ENCODE measurements at regions of chr12 and their contacts with region 1.

Region 1: DNA sequence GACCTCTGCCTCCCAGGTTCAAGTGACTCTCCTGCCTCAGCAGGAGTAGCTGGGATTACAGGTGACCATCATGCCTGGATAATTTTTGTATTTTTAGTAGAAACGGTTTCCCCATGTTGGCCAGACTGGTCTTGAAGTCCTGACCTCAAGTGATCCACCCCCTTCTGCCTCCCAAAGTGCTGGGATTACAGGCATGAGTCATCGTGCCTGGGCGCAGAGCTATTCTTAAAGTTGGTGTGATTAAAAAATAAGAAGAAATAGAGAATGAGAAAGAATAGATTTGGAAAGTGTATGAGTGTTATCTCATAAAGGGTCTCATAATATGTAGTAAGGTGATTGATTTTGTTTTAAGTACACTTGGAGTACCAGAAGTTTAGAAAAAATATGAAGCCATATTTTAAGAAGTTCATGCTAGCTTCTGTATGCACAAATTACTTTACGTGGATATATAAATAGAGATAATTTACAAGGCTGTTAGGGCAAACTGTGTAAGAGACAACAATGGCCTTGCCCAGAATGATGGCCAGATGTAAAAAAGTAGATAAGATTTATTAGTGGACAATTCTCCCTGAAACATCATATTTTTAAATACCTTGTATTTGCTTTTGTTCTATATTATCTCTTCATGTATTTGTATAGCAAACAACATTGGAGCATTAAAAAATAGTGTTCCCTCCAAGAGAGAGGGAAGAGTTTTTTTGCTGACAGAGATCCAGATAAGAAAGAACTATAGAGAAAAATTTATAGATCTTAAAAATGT is 1108.5 kb downstream of the SLC16A7 start:
- DNase-seq: no peak
- ATAC-seq: no peak
- H3K4me3 ChIP-seq: no peak overlapping the region
- H3K4me3 Mint-ChIP-seq: no peak overlapping the region
- H3K27ac ChIP-seq: no peak overlapping the region
- H3K27ac Mint-ChIP-seq: no peak overlapping the region
- H3K4me1 ChIP-seq: no peaks in the 10 kb centered on the region
- H3K4me1 Mint-ChIP-seq: no peaks in the 10 kb centered on the region
- H3K27me3 ChIP-seq: no peaks in the 10 kb centered on the region
- H3K27me3 Mint-ChIP-seq: no peaks in the 10 kb centered on the region
- CTCF ChIP-seq: no peak

Region 2: GRCh38 chr12:61018571-61018970 is 314.2 kb after region 1 on chr12:
- CTCF ChIA-PET with region 1: no interaction called
- POLR2A ChIA-PET with region 1: no interaction called
- intact Hi-C with region 1: loop called in 1 of 2 experiments (anchors 5 kb)
- DNase-seq: no peak
- ATAC-seq: no peak
- H3K4me3 ChIP-seq: no peak overlapping the region
- H3K4me3 Mint-ChIP-seq: no peak overlapping the region
- H3K27ac ChIP-seq: no peak overlapping the region
- H3K27ac Mint-ChIP-seq: no peak overlapping the region
- H3K4me1 ChIP-seq: no peaks in the 10 kb centered on the region
- H3K4me1 Mint-ChIP-seq: no peaks in the 10 kb centered on the region
- H3K27me3 ChIP-seq: no peaks in the 10 kb centered on the region
- H3K27me3 Mint-ChIP-seq: no peaks in the 10 kb centered on the region
- CTCF ChIP-seq: no peak